ENCODE measurements at regions of chr5 and their contacts with region 1.

Region 1: DNA sequence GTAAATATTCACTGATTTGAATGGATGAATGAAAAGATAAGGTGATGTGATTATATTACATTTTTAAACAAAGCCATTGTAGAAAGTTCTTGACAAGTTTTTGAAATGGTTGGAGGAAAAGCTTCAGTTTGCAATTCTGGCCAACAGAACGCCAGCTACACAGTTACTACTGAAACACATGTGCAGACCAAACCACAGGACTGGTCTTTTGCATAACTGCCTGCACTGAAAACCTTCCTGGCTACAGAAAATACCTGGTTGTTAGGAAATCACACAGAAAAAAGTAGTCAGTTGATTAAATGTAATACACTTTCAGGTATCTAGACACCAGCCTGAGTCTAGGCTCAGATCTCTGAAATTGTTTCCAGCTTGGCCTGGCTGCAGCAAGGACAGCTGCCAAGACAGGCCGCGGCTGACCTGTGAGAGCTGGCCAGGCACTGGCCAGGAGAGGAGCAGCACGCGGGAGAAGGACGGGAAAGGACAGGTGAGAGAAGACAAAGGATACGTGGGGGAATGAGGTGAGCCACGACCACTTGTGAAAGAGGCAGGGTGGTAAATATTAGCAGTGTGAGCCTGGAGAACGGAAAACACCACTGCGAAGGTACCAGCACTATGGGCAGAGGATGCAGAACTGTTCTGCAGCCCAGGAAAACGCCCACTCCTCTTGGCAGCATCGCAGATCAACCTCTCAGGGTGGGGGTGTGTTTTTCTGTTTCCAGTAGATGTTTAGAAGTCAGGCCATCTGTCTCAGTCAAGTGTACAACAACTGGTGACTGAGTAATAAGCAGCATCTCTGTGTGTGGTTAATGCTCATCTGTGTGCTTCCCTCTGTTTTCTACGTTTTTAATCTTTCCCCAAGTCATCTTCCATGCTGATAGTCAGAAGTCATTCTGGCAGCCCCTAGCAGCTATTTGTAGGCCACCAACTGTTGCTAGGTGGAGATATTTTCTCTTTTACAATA is 137.4 kb downstream of the SCAMP1 start:
- DNase-seq: no peak
- ATAC-seq: no peak
- H3K4me3 ChIP-seq: no peak overlapping the region
- H3K4me3 Mint-ChIP-seq: no peak overlapping the region
- H3K27ac ChIP-seq: no peak overlapping the region
- H3K27ac Mint-ChIP-seq: no peak overlapping the region
- H3K4me1 ChIP-seq: no peaks in the 10 kb centered on the region
- H3K4me1 Mint-ChIP-seq: no peaks in the 10 kb centered on the region
- H3K27me3 ChIP-seq: peaks cover 3 to 5% of the 10 kb centered on the region in 2 experiments
- H3K27me3 Mint-ChIP-seq: peaks cover 41% of the 10 kb centered on the region
- CTCF ChIP-seq: no peak

Region 2: GRCh38 chr5:78320401-78320800 is 177.5 kb before region 1 on chr5:
- CTCF ChIA-PET with region 1: no interaction called
- POLR2A ChIA-PET with region 1: no interaction called
- intact Hi-C with region 1: loop called in 1 of 2 experiments (anchors 10 kb)
- DNase-seq: peak in 2 of 9 experiments; percentile 29 to 47
- ATAC-seq: no peak
- H3K4me3 ChIP-seq: no peak overlapping the region
- H3K4me3 Mint-ChIP-seq: no peak overlapping the region
- H3K27ac ChIP-seq: no peak overlapping the region
- H3K27ac Mint-ChIP-seq: no peak overlapping the region
- H3K4me1 ChIP-seq: no peaks in the 10 kb centered on the region
- H3K4me1 Mint-ChIP-seq: no peaks in the 10 kb centered on the region
- H3K27me3 ChIP-seq: no peaks in the 10 kb centered on the region
- H3K27me3 Mint-ChIP-seq: peaks cover 3% of the 10 kb centered on the region
- CTCF ChIP-seq: peak; percentile 70

Measured in CD8-positive, alpha-beta T cell (primary cell).